ENCODE measurements at regions of chr1 and their contacts with region 1.

Region 1: DNA sequence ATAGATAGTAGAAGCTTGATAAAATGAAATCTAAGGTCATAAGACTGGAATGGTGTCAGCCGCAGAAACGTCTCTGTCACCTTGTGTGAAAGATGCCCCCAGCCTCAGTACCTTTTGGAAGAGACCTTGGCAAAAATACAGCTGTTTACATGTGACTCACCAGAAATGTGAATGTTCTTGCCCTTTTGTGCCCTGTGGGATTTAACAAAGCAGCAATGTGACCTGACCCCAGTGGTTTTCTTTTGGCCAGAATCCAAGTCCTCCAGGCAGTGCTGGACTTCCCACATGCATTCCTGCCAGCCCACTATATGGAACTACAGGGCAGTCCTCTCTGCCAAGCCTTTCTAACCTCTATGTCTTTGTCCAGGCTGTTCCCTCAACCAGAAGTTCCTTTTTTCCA is 27.2 kb upstream of the LRRC8C start:
- DNase-seq: no peak
- H3K4me3 ChIP-seq: no peak overlapping the region
- H3K27ac ChIP-seq: no peak overlapping the region
- H3K4me1 ChIP-seq: no peaks in the 10 kb centered on the region
- H3K27me3 ChIP-seq: no peaks in the 10 kb centered on the region
- CTCF ChIP-seq: no peak
- EP300 ChIP-seq: no peak
- POLR2A ChIP-seq: no peak

Region 2: DNA sequence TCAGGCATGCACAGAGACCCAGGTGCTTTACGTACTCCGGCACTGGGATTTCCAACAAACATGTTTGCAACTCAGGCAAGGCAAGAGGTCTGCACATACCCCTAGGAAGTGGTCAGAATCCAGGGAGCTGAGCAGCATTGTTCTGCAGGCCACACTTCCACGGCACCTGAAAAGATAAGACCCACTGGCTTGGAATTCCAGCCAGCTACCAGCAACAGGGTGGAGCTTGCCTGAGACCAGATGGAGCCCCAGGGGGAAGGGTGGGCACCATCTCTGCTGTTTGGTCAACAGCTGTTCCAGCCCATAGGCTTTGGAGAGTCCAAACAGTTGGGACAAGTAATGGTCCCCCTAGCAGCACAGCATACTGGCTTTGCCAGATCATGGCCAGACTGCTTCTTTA is 132.7 kb before region 1 on chr1:
- in situ Hi-C with region 1: loop called in 1 of 4 experiments (anchors 10 kb)
- intact Hi-C with region 1: no loop called
- DNase-seq: no peak
- H3K4me3 ChIP-seq: no peak overlapping the region
- H3K27ac ChIP-seq: no peak overlapping the region
- H3K4me1 ChIP-seq: no peaks in the 10 kb centered on the region
- H3K27me3 ChIP-seq: no peaks in the 10 kb centered on the region
- CTCF ChIP-seq: no peak
- EP300 ChIP-seq: no peak
- POLR2A ChIP-seq: no peak

Region 3: GRCh38 chr1:89483010-89483756 is 122.5 kb before region 1 on chr1:
- in situ Hi-C with region 1: loop called in 1 of 4 experiments (anchors 10 kb)
- intact Hi-C with region 1: loop called (anchors 10 kb)
- DNase-seq: peak; percentile 79
- H3K4me3 ChIP-seq: no peak overlapping the region
- H3K27ac ChIP-seq: no peak overlapping the region
- H3K4me1 ChIP-seq: no peaks in the 10 kb centered on the region
- H3K27me3 ChIP-seq: no peaks in the 10 kb centered on the region
- CTCF ChIP-seq: peak; percentile 54 to 74 (median 72)
- EP300 ChIP-seq: no peak
- POLR2A ChIP-seq: no peak

Region 4: DNA sequence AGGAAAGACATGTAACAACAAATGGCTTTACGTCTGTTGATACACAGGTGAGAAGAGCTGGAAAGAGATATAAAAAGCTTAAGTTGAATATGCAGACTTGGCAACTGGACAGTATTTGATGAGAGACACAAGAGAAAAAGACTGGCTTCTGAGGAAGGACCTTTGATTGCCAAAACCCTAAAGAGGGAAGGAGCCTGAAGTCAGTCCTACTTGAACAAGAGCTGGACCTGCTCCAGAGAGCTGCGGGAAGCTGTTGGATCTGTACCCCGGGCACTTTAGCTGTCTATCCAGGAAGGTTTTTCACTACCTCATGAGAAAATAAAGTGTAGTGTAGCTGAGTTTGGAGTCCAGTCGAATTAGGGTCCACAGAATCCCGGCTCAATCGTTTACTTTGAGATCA is 106.4 kb before region 1 on chr1:
- in situ Hi-C with region 1: no loop called
- intact Hi-C with region 1: no loop called
- DNase-seq: no peak
- H3K4me3 ChIP-seq: no peak overlapping the region
- H3K27ac ChIP-seq: no peak overlapping the region
- H3K4me1 ChIP-seq: no peaks in the 10 kb centered on the region
- H3K27me3 ChIP-seq: no peaks in the 10 kb centered on the region
- CTCF ChIP-seq: no peak
- EP300 ChIP-seq: no peak
- POLR2A ChIP-seq: no peak

Region 5: DNA sequence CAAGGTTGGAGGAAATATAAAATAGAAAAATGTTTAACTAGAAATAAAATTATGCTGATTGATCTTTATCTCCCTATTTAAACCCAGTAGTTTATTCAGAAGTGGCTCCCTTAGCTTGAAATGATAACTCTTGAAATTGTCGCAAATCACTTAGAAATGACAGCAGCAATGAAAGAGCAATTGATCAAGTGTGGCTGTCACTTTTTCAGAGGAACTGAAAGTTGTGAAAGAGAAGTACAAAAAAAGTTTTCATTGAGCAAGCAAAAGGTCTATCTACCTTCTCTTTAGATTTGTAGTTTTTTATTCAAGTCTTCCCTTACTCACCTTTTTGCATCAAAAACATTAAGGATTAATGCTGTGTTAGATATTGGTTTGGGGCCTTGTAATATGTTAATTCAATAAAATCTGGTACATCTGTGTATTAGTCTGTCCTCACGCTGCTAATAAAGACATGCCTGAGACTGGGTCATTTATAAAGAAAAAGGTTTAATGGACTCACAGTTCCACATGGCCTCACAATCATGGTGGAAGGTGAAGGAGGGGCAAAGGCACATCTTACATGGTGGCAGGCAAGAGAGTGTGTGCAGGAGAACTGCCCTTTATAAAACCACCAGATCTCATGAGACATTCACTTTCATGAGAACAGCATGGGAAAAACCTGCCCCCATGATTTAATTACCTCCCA is 75.5 kb after region 1 on chr1:
- in situ Hi-C with region 1: no loop called
- intact Hi-C with region 1: no loop called
- DNase-seq: no peak
- H3K4me3 ChIP-seq: no peak overlapping the region
- H3K27ac ChIP-seq: no peak overlapping the region
- H3K4me1 ChIP-seq: no peaks in the 10 kb centered on the region
- H3K27me3 ChIP-seq: no peaks in the 10 kb centered on the region
- CTCF ChIP-seq: no peak
- EP300 ChIP-seq: no peak
- POLR2A ChIP-seq: no peak

Measured in transverse colon (tissue), 4 donors.